AG04449 (cell line): ENCODE measurements at regions of chr3 and their contacts with region 1.

Region 1: DNA sequence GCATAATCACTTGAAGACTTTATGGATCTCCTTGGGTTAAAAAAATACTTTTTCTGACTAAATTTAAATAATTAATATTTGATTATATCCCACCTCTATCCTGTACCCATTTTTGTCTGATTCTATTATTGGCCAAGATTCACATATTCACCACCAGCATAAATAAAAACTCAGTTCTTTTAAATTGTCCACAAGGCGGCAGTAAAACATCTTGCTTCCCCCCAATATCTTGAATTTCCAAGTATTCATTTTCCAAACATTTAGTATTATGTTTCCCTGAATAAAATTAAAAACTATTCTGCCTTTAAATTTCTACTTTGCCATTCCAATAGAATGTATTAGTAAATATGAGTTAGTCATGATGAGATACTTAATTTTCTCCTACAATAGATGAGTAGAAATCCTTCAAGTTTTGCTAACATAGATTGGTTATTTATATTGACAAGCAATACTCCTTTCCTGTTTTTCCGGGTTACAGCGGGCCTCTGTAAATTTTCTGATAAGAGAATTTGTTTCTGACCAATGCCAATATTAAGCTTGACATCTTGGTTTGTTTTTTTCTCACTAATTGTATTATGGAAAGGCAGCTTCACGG is 218.7 kb upstream of the MDFIC2 start:
- DNase-seq: no peak
- H3K4me3 ChIP-seq: no peak overlapping the region
- CTCF ChIP-seq: peak; percentile 23

Region 2: GRCh38 chr3:70519913-70520659 is 11.1 kb before region 1 on chr3:
- CTCF ChIA-PET with region 1: interaction called, 14 read pairs
- POLR2A ChIA-PET with region 1: no interaction called
- DNase-seq: no peak
- H3K4me3 ChIP-seq: no peak overlapping the region
- CTCF ChIP-seq: no peak

Region 3: GRCh38 chr3:70550723-70551319 is 19.7 kb after region 1 on chr3:
- CTCF ChIA-PET with region 1: interaction called, 29 read pairs
- POLR2A ChIA-PET with region 1: no interaction called
- DNase-seq: no peak
- H3K4me3 ChIP-seq: no peak overlapping the region
- CTCF ChIP-seq: peak; percentile 84

Region 4: GRCh38 chr3:71652781-71653413 is 1121.7 kb after region 1 on chr3:
- CTCF ChIA-PET with region 1: interaction called, 31 read pairs
- POLR2A ChIA-PET with region 1: no interaction called
- DNase-seq: peak; percentile 21
- H3K4me3 ChIP-seq: no peak overlapping the region
- CTCF ChIP-seq: peak; percentile 9

Region 5: DNA sequence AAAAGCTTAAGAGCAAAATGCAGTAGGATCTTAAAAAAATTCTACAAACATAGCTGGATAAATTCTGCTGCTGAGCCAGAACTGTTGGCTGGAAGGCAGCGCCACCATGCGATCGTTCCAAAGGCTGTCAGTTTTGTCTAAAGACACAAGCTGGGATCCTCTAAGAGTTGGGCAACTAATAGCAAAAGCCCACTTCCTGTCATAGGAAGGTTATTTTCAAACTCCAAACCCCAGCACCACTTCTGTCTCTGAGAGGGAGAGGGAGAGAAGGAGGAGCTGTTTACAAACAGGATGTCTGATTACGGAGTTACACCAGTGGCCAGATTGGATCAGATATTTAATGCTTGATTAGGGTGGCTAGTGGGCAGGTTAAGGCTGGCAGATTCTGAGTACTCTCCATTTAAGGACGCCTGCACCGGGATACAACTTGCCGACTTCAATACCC is 1150.1 kb after region 1 on chr3:
- CTCF ChIA-PET with region 1: interaction called, 12 read pairs
- POLR2A ChIA-PET with region 1: no interaction called
- DNase-seq: peak; percentile 17
- H3K4me3 ChIP-seq: no peak overlapping the region
- CTCF ChIP-seq: peak; percentile 74